RWPE1 (cell line): ENCODE measurements at regions of chr1 and their contacts with region 1.

Region 1: GRCh38 chr1:67500413-67500959 is 70.3 kb upstream of the SERBP1 start:
- DNase-seq: peak; percentile 92
- H3K27ac ChIP-seq: no peak overlapping the region
- CTCF ChIP-seq: peak; percentile 97

Region 2: GRCh38 chr1:67214420-67215174 is 285.9 kb before region 1 on chr1:
- CTCF ChIA-PET with region 1: interaction called, 41 read pairs
- POLR2A ChIA-PET with region 1: no interaction called
- DNase-seq: peak; percentile 13
- H3K27ac ChIP-seq: no peak overlapping the region
- CTCF ChIP-seq: peak; percentile 56

Region 3: DNA sequence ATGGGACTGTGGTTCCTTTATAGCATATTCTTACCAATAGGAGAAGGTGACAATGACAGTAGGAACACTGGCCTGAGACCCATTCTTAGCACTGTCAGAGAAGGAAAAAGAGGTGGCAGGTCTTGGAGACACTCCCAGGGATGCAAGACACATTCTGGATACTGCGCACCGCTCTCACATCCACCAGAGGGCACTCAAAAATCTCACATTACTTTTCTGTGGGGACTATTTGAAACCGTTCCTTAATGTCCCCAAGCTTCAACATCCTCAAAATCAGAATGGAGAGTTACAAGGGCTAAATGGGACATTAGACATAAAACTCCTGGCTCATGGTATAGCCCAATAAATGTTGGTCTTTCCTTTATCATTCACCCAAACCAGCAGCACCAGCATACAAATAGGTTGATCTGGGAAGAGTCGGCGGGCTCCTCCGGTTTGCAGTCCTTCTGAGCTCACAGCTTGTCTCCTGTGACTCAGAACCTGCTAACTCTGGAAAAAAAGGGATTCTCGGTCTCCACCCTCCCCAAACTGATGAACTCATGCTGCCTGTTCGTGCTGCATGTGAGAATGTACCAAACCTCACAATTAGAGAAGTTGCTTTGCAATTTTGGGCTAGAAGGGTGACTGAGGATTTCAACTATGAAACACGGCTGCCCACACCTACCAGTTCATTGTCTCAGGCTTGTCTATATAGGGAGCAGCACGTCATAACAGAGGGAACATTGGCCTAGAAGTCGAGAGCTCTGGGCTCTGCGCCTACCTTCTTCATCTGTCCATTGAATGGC is 152.6 kb before region 1 on chr1:
- CTCF ChIA-PET with region 1: interaction called, 14 read pairs
- POLR2A ChIA-PET with region 1: no interaction called
- DNase-seq: peak; percentile 86
- H3K27ac ChIP-seq: peak overlapping the region; percentile 86
- CTCF ChIP-seq: peak; percentile 72

Region 4: GRCh38 chr1:67446893-67447292 is 53.6 kb before region 1 on chr1:
- CTCF ChIA-PET with region 1: no interaction called
- POLR2A ChIA-PET with region 1: no interaction called
- DNase-seq: no peak
- H3K27ac ChIP-seq: no peak overlapping the region
- CTCF ChIP-seq: no peak

Region 5: GRCh38 chr1:67586596-67586995 is 86.1 kb after region 1 on chr1:
- CTCF ChIA-PET with region 1: no interaction called
- POLR2A ChIA-PET with region 1: no interaction called
- DNase-seq: no peak
- H3K27ac ChIP-seq: no peak overlapping the region
- CTCF ChIP-seq: no peak